Activated CD4-positive, alpha-beta T cell treated with anti-CD3 and anti-CD28 coated beads for 36 hours (primary cell): ENCODE measurements at regions of chr5 and their contacts with region 1.

Region 1: GRCh38 chr5:91280362-91281269 is 102.5 kb downstream of the ARRDC3 start:
- DNase-seq: peak; percentile 97
- ATAC-seq: peak; percentile 80
- H3K4me3 Mint-ChIP-seq: peak overlapping the region; percentile 76
- H3K27ac Mint-ChIP-seq: peak overlapping the region; percentile 99
- H3K4me1 Mint-ChIP-seq: peaks cover 53% of the 10 kb centered on the region
- H3K27me3 Mint-ChIP-seq: no peaks in the 10 kb centered on the region

Region 2: DNA sequence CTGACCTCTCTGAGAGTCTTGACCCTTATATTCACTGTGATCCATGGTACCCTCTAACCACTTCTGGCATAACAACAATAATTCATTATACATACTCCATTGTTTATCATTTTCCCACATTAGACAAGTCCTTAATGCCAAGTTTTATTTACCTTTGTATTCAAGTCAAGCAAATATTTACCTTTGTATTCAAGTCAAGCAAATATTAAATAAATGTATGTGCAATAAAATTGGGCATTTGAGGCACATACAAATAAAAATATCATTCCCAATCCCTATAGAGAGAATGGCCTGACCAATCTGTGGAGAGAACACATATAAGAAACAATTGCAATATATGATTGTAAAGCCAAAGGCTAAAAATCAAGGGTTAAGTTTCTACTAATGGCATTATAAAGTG is 19.9 kb before region 1 on chr5:
- CTCF ChIA-PET with region 1: no interaction called
- POLR2A ChIA-PET with region 1: no interaction called
- intact Hi-C with region 1: no loop called
- DNase-seq: no peak
- ATAC-seq: no peak
- H3K4me3 Mint-ChIP-seq: no peak overlapping the region
- H3K27ac Mint-ChIP-seq: no peak overlapping the region
- H3K4me1 Mint-ChIP-seq: no peaks in the 10 kb centered on the region
- H3K27me3 Mint-ChIP-seq: peaks cover 3% of the 10 kb centered on the region

Region 3: GRCh38 chr5:91361055-91361701 is 80.6 kb after region 1 on chr5:
- CTCF ChIA-PET with region 1: no interaction called
- POLR2A ChIA-PET with region 1: no interaction called
- intact Hi-C with region 1: loop called (anchors 1 to 5 kb)
- DNase-seq: peak; percentile 12
- ATAC-seq: peak; percentile 77
- H3K4me3 Mint-ChIP-seq: peak overlapping the region; percentile 24
- H3K27ac Mint-ChIP-seq: peak overlapping the region; percentile 51
- H3K4me1 Mint-ChIP-seq: peaks cover 10% of the 10 kb centered on the region
- H3K27me3 Mint-ChIP-seq: peaks cover 7% of the 10 kb centered on the region

Region 4: DNA sequence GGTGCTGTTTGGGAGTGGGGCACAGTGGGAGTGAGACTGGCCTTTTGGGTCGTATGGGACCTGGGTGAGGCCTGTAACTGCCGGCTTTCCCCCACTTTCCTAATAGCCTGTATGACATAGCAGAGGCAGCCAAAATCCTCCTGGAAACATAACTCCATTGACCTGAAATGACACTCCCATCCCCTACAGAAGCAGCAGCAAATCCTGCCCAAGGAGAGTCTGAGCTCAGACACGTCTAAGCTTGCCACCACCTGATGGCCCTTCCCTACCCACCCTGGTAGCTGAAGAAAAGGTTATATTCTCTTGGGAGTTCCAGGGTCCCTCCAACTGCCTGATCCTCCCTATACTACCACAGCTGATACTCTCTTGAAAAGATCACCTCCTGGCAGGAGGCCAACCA is 282.3 kb after region 1 on chr5:
- CTCF ChIA-PET with region 1: no interaction called
- POLR2A ChIA-PET with region 1: no interaction called
- intact Hi-C with region 1: no loop called
- DNase-seq: no peak
- ATAC-seq: no peak
- H3K4me3 Mint-ChIP-seq: no peak overlapping the region
- H3K27ac Mint-ChIP-seq: no peak overlapping the region
- H3K4me1 Mint-ChIP-seq: no peaks in the 10 kb centered on the region
- H3K27me3 Mint-ChIP-seq: no peaks in the 10 kb centered on the region